Adrenal gland (tissue), 19 donors: ENCODE measurements at regions of chr17 and their contacts with region 1.

Region 1: GRCh38 chr17:79707931-79708891 is 22.5 kb upstream of the ENPP7 start:
- DNase-seq: peak in 5 of 7 donors; percentile 42 to 74 (median 54)
- H3K4me3 ChIP-seq: no peak overlapping the region
- H3K27ac ChIP-seq: no peak overlapping the region
- H3K4me1 ChIP-seq: peaks cover 0 to 2% of the 10 kb centered on the region in 2 donors
- H3K27me3 ChIP-seq: peaks cover 10% of the 10 kb centered on the region
- CTCF ChIP-seq: peak; percentile 63 to 80 (median 74)
- POLR2A ChIP-seq: no peak

Region 2: DNA sequence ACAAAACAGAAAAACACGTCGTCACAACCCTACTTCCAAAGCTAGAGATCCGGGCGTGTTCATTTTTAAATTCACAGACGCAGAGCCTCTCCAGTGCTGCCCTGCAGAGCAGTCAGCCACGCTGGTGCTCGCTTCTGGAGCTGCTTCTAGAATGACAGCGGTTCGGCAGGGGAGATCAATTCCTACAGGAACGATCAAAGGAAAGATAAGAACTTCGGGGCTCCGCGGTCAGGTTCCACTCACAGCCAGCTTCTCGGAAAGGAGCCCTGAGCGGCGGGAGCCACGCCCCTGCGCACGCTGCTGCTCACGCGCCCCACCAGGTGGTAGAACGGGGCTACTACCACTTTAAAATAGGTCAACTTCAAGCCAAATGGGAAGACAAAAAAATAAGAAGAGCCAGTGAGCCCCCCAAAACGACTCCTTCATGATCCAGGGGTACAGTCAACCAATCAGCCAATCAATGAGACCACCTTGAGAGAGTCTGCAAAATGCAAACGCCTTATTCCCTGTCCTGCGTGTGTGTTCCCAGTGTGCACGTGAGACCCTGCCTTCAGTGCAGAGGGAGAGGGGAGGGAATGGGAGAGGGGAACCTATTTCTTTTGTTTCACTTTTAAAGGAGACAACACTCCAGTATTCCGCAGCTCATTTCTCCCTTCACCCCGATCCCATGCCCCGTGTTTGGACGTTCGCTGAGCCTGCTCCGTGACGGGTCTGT is 307.1 kb before region 1 on chr17:
- intact Hi-C with region 1: loop called (anchors 5 to 10 kb)
- DNase-seq: peak; percentile 59 to 86 (median 77)
- H3K4me3 ChIP-seq: peak overlapping the region in 1 of 4 donors; percentile 36
- H3K27ac ChIP-seq: no peak overlapping the region
- H3K4me1 ChIP-seq: no peaks in the 10 kb centered on the region
- H3K27me3 ChIP-seq: peaks cover 32% of the 10 kb centered on the region
- CTCF ChIP-seq: peak; percentile 57 to 87 (median 68)
- POLR2A ChIP-seq: no peak

Region 3: DNA sequence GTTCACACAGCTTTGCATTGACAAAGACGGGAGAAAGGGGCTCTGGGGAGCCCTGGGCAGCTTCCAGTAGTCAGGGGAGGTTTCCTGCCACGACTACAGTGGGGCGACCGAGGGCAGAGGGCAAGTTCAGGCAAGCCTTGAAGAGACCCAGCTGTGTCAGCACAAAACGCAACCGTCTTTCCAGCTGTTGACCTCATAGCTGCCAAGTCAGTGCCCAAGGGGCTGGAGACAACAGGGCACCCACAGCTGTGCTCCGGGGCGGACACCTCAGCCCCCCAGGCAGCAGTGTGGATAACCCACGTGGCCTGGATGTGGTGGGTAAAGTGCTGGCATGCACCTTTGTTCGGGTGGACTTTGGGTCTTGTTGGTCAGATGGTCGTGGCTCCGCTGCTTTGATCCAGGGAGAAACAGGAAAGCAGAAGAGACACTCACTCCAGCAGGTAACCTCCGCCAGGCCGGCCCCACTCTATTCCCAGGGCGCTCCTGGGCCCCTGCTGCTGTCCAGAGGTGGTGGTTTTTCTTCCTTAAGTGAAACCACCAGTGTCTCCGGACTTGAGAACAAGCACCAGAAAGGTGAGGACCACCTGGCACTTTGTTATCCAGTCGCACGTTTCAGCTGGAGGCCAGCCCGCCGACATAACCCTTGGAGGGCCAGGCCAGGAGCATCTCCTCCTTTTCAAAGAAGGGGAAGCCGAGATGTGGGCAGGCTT is 52.1 kb after region 1 on chr17:
- intact Hi-C with region 1: no loop called
- DNase-seq: no peak
- H3K4me3 ChIP-seq: no peak overlapping the region
- H3K27ac ChIP-seq: no peak overlapping the region
- H3K4me1 ChIP-seq: no peaks in the 10 kb centered on the region
- H3K27me3 ChIP-seq: peaks cover 4% of the 10 kb centered on the region
- CTCF ChIP-seq: no peak
- POLR2A ChIP-seq: no peak